ENCODE measurements at regions of chr18 and their contacts with region 1.

Region 1: DNA sequence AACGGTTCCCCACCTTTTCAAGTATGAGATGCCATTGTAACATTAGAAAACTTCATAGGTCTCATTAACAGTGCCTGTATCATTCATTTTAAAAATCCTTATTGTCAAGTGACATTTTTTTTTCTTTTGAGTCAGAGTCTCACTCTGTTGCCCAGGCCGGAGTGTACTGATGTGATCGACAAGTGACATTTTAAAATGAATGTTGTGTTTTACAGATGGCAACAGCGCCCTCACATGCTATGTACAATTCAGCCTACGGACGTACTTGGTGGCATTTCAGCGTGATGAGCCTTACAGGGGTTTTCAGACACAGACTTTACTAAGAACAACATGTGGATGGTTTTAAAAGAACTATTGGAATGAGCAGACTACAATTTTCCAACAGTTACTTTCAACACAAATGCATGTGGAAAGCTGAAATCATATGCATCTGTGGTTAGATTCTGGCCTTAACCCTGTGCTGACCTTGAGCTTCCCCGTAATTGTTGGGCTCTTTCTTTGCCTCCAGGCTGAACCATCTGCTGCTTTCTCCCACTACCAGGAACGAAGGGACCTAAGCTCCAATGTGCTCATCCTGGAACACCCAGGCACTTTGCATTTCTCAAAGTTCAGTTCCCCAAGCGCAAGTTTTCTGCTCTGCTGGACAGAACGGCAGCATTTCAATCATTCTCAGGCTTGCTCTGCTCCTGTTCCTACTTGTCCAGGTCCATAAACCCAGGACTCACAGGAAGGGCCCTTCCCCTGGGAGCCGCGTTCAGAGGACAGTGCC is 119.9 kb upstream of the NDUFV2 start:
- DNase-seq: peak; percentile 69
- H3K4me3 Mint-ChIP-seq: no peak overlapping the region
- H3K27ac Mint-ChIP-seq: no peak overlapping the region
- H3K4me1 Mint-ChIP-seq: peaks cover 18% of the 10 kb centered on the region
- H3K27me3 Mint-ChIP-seq: no peaks in the 10 kb centered on the region
- CTCF ChIP-seq: peak; percentile 45

Region 2: GRCh38 chr18:8661754-8662569 is 320.6 kb before region 1 on chr18:
- CTCF ChIA-PET with region 1: interaction called, 94 read pairs
- POLR2A ChIA-PET with region 1: interaction called, 3 read pairs
- intact Hi-C with region 1: no loop called
- DNase-seq: no peak
- H3K4me3 Mint-ChIP-seq: no peak overlapping the region
- H3K27ac Mint-ChIP-seq: no peak overlapping the region
- H3K4me1 Mint-ChIP-seq: peaks cover 19% of the 10 kb centered on the region
- H3K27me3 Mint-ChIP-seq: no peaks in the 10 kb centered on the region
- CTCF ChIP-seq: no peak

Region 3: GRCh38 chr18:8685141-8685913 is 297.3 kb before region 1 on chr18:
- CTCF ChIA-PET with region 1: interaction called, 38 read pairs
- POLR2A ChIA-PET with region 1: interaction called, 10 read pairs
- intact Hi-C with region 1: no loop called
- DNase-seq: peak; percentile 85
- H3K4me3 Mint-ChIP-seq: peak overlapping the region; percentile 54
- H3K27ac Mint-ChIP-seq: peak overlapping the region; percentile 92
- H3K4me1 Mint-ChIP-seq: peaks cover 9% of the 10 kb centered on the region
- H3K27me3 Mint-ChIP-seq: no peaks in the 10 kb centered on the region
- CTCF ChIP-seq: no peak

Region 4: DNA sequence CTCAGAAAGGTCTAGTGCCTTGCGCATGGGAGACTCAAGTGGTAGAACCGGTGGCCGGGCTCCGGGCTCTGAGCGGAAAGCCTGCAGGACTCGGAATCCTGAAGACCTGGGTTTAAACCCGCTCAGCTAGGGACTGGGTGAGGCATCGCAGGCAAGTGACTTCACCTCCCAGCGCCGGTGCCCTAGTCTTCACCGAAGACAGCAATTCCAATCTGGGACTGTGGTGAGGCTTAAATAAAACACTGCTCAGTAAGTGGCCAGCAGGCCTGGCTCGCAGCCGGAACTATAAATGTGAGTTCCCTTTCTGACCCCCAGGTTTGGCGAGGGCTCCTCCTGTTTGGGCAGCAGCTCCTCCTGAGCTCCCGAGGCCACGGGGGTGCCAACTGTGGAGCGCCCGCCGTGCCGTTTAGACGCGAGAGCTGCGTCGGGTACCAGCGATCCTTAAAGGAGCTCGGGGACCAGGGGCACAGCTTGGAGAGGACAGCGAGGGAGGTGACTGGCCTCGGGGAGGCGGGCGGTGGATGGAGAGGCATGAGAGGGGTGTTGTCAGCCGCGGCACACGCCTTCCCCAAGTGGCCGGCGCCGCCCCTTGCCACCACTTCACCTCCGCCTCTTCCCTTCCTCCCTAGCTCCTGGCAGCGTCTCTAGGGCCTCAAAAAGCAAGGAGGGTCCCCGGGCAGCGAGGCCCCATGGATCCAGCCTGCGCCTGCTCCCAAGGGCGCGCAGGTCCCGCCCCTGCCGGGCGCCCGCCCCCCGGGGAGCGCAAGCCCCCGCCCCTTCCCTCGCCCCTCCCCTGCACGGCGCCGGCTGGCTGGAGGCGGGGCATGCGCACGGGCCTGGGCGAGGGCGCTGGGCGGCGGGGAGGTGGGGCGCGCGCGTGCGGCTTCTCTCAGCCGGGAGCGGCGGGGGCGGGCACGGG is 278.0 kb before region 1 on chr18:
- CTCF ChIA-PET with region 1: interaction called, 35 read pairs
- POLR2A ChIA-PET with region 1: interaction called, 12 read pairs
- intact Hi-C with region 1: no loop called
- DNase-seq: peak; percentile 87
- H3K4me3 Mint-ChIP-seq: peak overlapping the region; percentile 90
- H3K27ac Mint-ChIP-seq: no peak overlapping the region
- H3K4me1 Mint-ChIP-seq: peaks cover 27% of the 10 kb centered on the region
- H3K27me3 Mint-ChIP-seq: no peaks in the 10 kb centered on the region
- CTCF ChIP-seq: no peak

Region 5: DNA sequence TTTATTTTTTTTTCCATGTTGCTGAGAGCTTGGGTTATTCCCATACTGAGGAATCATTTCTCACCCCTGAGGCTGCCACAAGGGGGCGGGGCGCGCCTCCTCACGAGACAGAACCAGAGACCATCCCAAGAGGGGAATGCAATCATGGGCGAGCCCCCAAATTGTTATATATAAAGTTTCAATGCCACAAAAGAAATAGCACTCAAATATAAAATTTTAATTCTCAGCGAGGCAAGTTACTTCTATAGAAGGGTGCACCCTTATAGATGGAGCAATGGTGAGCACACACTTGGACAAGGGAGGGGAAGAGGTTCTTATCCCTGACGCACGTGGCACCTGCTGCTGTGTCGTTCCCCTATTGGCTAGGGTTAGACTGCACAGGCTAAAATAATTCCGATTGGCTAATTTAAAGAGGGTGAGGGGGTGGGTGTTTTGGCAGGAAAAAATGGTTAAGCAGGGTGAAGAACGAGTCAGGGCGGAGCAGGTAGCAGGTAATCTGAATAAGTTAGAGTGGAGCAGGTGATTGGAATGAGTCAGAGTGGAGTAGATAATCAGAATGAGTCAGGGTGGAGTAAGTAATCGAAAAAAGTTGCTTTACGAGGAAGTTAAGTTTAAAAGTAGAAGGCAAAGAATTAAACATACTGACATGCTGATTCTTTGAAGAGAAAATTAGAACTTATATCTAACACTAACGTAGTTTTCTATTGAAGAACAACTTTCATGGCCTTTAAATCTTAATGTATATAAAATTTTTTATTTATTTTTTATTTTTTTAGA is 99.8 kb before region 1 on chr18:
- CTCF ChIA-PET with region 1: interaction called, 12 read pairs
- POLR2A ChIA-PET with region 1: no interaction called
- intact Hi-C with region 1: loop called (anchors 2 kb)
- DNase-seq: peak; percentile 85
- H3K4me3 Mint-ChIP-seq: no peak overlapping the region
- H3K27ac Mint-ChIP-seq: no peak overlapping the region
- H3K4me1 Mint-ChIP-seq: peaks cover 6% of the 10 kb centered on the region
- H3K27me3 Mint-ChIP-seq: no peaks in the 10 kb centered on the region
- CTCF ChIP-seq: peak; percentile 20

Region 6: DNA sequence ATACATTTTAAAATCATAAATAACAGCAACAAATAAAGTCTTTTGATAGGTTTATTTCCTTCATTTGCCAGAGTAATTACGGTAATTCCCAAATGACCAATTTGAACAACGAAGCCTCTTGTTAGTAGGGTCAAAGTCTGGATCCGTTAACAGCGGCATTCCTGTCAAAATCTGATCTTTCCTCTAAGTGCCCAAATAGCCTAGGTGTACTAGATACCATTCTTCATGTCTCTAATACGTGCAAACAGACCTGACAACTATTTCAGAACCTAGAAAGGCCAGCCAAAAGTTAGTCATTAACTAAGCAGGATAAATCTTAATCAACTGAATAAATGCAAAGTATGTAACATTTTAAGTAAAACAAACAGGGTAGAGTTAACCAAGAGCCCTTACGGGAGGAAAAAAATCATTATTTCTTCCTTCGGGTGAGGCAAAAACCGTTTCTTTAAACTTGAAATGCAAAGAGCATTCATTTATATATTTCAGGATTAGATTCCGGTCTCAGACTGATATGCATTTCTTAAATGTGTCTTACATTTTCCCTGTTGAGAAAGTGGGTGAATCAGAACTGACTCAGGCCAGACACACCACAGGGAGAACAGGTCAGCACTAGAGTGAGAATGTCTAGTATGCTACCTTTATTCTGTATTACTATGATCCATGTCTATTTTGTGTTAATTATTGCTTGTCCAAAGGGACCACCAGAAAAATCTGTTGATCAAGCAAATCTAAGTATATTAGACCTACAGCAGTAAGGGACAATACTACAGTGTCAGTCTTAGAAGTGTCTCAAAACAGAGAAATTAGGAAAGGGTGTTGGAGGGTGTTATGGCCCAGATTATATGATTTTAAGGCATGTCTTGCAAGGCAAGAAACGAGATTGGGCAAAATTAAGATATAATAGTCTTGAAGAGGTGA is 21.6 kb before region 1 on chr18:
- CTCF ChIA-PET with region 1: interaction called, 17 read pairs
- POLR2A ChIA-PET with region 1: interaction called, 3 read pairs
- intact Hi-C with region 1: no loop called
- DNase-seq: peak; percentile 67
- H3K4me3 Mint-ChIP-seq: no peak overlapping the region
- H3K27ac Mint-ChIP-seq: peak overlapping the region; percentile 71
- H3K4me1 Mint-ChIP-seq: peaks cover 9% of the 10 kb centered on the region
- H3K27me3 Mint-ChIP-seq: no peaks in the 10 kb centered on the region
- CTCF ChIP-seq: no peak

Region 7: GRCh38 chr18:9055185-9055584 is 72.6 kb after region 1 on chr18:
- CTCF ChIA-PET with region 1: interaction called, 5 read pairs
- POLR2A ChIA-PET with region 1: interaction called, 13 read pairs
- intact Hi-C with region 1: loop called (anchors 2 kb)
- DNase-seq: peak; percentile 90
- H3K4me3 Mint-ChIP-seq: peak overlapping the region; percentile 31
- H3K27ac Mint-ChIP-seq: peak overlapping the region; percentile 89
- H3K4me1 Mint-ChIP-seq: peaks cover 16% of the 10 kb centered on the region
- H3K27me3 Mint-ChIP-seq: no peaks in the 10 kb centered on the region
- CTCF ChIP-seq: no peak